ENCODE measurements at regions of chr10 and their contacts with region 1.

Region 1: DNA sequence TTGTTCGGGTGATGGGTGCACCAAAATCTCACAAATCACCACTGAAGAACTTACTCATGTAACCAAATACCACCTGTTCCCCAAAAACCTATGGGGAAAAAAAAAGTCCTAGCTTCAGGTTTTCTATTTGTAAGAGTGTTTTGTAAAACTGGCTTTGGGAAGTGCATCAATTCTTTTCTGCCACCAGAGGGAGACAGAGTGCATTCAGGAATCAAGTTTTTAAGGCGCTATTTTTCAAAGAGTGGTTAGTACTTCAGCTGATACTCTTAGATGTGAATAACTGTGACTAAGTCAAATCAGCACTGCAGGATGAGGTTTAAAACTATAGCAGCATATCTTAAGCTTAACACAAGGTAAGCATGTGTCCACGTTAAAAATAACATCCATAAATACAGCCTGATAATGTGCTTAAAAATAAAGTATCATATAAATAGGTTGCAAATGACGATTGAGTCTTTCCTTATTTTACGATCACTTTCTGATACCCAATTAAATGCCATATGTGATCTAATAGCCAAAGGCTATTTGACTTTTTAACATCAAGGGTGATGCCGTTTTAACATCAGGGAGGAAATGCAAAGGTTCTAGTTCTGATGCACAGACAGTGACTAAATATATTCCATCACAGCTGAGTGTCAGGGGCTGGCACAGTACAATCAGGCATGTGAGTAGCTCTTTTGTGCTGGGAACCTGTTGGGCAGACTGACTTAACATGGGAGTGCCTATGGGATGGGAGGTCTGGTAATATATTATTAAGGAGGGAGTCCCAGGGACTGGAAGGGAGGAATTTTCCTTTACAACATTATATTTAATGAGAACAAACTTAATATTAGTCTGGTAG is 10.6 kb upstream of the LYZL2 start:
- DNase-seq: no peak
- ATAC-seq: no peak
- H3K4me3 ChIP-seq: no peak overlapping the region
- H3K27ac ChIP-seq: no peak overlapping the region
- H3K4me1 ChIP-seq: peaks cover 0 to 3% of the 10 kb centered on the region in 2 donors
- H3K27me3 ChIP-seq: no peaks in the 10 kb centered on the region

Region 2: DNA sequence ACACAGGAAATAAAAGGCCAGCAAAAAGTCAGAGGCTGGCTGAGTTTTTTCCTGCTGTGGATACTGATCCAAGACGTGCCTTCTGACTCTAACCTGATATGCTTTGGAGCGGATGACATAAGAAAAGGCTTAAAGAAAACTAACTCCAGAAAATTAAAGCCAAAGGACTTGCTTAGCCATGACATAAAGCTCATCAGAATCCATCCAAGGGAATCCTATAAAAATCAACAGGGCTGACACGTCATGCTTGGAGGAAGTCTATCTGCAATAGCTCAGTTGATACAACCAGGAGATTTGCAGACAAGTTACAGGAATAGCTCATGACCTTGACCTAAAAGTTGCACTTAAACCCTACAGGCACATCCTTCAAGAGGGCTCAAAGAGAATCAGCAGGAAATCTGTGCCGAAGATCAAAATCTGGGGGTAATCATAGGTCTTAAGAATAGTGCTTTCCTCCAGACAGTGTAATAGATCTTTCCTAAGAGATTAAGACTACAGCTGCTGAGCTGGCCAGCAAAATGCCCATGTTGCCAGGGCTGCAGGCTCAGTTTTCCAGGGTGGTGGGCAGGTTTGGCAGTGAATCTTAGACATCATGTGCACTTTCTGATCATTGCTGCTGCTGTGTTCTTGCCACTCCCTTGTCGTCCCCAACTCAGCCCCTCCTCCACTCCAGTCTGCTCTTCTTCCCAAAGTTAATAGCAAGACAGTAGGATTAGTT is 893.9 kb before region 1 on chr10:
- intact Hi-C with region 1: loop called in 1 of 2 experiments (anchors 10 kb)
- DNase-seq: no peak
- ATAC-seq: peak; percentile 64
- H3K4me3 ChIP-seq: no peak overlapping the region
- H3K27ac ChIP-seq: peak overlapping the region in 1 of 2 donors; percentile 64
- H3K4me1 ChIP-seq: peaks cover 3 to 6% of the 10 kb centered on the region in 2 donors
- H3K27me3 ChIP-seq: no peaks in the 10 kb centered on the region

Region 3: DNA sequence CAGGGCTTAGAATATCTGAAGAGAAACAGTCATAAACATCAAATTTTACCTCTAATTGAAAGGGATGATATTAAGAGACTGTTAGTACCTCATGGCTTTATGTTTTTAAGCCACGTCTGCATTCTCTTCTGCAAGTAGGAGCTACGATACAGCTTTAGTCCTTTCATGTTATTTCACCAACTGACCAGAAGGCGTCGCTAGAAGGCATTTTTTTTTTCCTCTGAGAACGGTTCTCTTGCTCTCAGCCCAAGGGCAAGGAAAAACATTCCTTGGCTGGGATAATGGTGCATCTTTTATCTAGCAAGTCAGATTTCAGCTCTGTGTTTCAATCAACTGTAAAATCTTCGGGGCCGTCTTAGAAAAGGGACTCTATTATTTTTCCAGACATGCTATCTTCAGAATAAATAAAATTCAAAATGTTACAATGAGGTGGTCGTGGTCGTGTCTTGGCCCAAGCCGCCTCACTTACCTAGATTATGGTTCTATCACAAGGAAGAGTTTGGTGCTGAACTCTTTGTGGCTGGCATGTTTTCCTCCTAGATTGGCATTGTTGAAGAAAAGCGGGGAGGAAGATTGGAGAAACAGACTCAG is 31.0 kb after region 1 on chr10:
- intact Hi-C with region 1: loop called in 1 of 2 experiments (anchors 5 kb)
- DNase-seq: no peak
- ATAC-seq: peak; percentile 81
- H3K4me3 ChIP-seq: no peak overlapping the region
- H3K27ac ChIP-seq: no peak overlapping the region
- H3K4me1 ChIP-seq: no peaks in the 10 kb centered on the region
- H3K27me3 ChIP-seq: no peaks in the 10 kb centered on the region